MCF 10A (cell line): ENCODE measurements at regions of chr7 and their contacts with region 1.

Region 1: GRCh38 chr7:16083931-16084330 is 337.4 kb downstream of the CRPPA start:
- DNase-seq: peak; percentile 55
- H3K4me3 Mint-ChIP-seq: peak overlapping the region; percentile 19
- H3K27ac Mint-ChIP-seq: no peak overlapping the region
- H3K4me1 Mint-ChIP-seq: peaks cover 30% of the 10 kb centered on the region
- H3K27me3 Mint-ChIP-seq: no peaks in the 10 kb centered on the region
- CTCF ChIP-seq: no peak

Region 2: GRCh38 chr7:15853832-15854470 is 230.0 kb before region 1 on chr7:
- CTCF ChIA-PET with region 1: no interaction called
- POLR2A ChIA-PET with region 1: no interaction called
- intact Hi-C with region 1: no loop called
- DNase-seq: no peak
- H3K4me3 Mint-ChIP-seq: no peak overlapping the region
- H3K27ac Mint-ChIP-seq: no peak overlapping the region
- H3K4me1 Mint-ChIP-seq: no peaks in the 10 kb centered on the region
- H3K27me3 Mint-ChIP-seq: peaks cover 73% of the 10 kb centered on the region
- CTCF ChIP-seq: no peak

Region 3: GRCh38 chr7:16098585-16099179 is 14.8 kb after region 1 on chr7:
- CTCF ChIA-PET with region 1: interaction called, 76 read pairs
- POLR2A ChIA-PET with region 1: interaction called, 3 read pairs
- intact Hi-C with region 1: no loop called
- DNase-seq: peak; percentile 59
- H3K4me3 Mint-ChIP-seq: no peak overlapping the region
- H3K27ac Mint-ChIP-seq: no peak overlapping the region
- H3K4me1 Mint-ChIP-seq: peaks cover 4% of the 10 kb centered on the region
- H3K27me3 Mint-ChIP-seq: no peaks in the 10 kb centered on the region
- CTCF ChIP-seq: peak; percentile 82

Region 4: DNA sequence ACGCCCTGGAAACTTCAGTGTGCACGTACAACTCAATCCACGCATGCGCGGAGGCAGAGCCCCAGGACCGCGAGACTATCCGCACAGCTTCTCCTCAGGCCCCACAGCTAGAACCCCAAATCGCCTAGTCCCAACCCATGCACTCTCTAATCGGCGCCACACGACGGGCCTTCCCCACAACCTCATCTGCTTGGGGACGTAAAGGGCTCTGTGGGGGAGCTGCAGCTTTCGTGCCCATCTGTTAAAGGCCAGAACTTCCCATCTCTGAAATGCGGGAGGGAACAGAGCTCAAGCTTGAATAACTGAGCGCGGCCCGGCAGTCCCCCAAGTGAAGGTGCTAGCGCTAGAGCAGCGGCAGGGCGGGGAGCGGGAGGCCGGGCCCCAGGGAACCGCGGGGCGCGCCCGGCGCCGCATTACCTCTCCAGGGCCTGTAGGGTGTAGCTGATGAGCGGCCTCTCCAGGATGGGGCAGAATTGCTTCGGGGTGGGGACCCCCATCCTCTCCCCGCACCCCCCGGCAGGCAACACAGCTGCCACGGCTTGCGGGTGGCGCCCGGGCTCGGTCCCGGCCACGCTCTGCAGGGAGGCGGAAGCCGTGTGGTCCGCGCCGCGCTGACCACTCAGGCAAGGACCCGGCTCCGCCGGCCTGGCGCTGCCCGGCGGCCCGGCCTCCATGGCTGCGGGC is 336.9 kb after region 1 on chr7:
- CTCF ChIA-PET with region 1: no interaction called
- POLR2A ChIA-PET with region 1: no interaction called
- intact Hi-C with region 1: loop called (anchors 10 kb)
- DNase-seq: peak; percentile 86
- H3K4me3 Mint-ChIP-seq: peak overlapping the region; percentile 74
- H3K27ac Mint-ChIP-seq: peak overlapping the region; percentile 77
- H3K4me1 Mint-ChIP-seq: peaks cover 18% of the 10 kb centered on the region
- H3K27me3 Mint-ChIP-seq: no peaks in the 10 kb centered on the region
- CTCF ChIP-seq: peak; percentile 8

Region 5: DNA sequence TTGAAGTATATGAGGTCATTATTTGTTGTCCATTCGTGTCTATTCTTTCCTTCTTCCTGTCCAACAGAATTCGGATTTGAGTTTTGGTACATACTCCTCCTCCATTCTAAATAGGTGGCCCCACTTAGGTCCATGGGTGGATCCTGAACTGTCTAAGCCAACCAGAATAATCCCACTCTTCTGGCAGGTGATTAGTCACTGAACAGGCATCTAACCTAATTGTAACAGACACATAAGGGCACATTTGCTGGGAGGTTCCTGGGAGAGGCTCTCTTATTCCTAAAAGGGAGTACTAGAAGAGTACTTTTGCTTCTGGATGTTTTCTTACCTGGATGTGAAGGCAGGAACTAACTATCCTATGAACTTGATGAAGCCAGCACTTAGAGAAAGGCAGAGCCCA is 459.5 kb after region 1 on chr7:
- CTCF ChIA-PET with region 1: no interaction called
- POLR2A ChIA-PET with region 1: no interaction called
- intact Hi-C with region 1: no loop called
- DNase-seq: no peak
- H3K4me3 Mint-ChIP-seq: no peak overlapping the region
- H3K27ac Mint-ChIP-seq: no peak overlapping the region
- H3K4me1 Mint-ChIP-seq: no peaks in the 10 kb centered on the region
- H3K27me3 Mint-ChIP-seq: no peaks in the 10 kb centered on the region
- CTCF ChIP-seq: no peak